Endothelial cell of umbilical vein (primary cell): ENCODE measurements at regions of chr20 and their contacts with region 1.

Region 1: GRCh38 chr20:5529331-5530148 is 212.8 kb upstream of the PROKR2 start:
- DNase-seq: peak; percentile 71
- H3K4me3 ChIP-seq: no peak overlapping the region
- H3K27ac ChIP-seq: no peak overlapping the region
- H3K4me1 ChIP-seq: no peaks in the 10 kb centered on the region
- H3K27me3 ChIP-seq: peaks cover 0 to 5% of the 10 kb centered on the region in 2 experiments
- CTCF ChIP-seq: peak; percentile 91 to 94
- POLR2A ChIP-seq: no peak

Region 2: DNA sequence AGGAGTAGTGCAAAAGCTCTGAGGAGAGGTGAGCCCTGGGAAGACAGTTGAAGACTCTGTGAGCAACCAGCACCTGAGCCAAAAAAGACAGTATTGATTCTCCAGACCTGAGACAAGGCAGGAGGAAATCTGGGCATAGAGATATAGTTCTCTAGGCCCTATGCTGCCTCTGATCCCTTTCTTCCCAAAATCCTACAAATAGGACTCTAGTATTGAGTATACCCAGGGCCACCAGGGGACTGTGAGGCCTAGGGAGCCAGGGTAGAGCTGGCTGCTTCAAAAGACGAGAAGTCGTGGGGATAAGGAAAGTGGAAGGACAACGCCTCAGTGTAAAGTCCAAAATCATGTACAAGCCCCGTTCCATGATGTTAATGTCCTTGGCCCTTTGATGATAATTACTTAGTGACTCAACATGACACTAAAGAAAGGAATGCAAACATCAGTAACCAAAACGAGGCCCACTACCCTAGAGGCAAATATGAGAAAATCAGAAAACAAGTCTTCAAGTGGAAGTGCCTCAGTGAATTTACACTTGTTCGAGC is 15.5 kb before region 1 on chr20:
- CTCF ChIA-PET with region 1: interaction called, 15 read pairs
- POLR2A ChIA-PET with region 1: no interaction called
- dilution Hi-C with region 1: no loop called
- intact Hi-C with region 1: no loop called
- DNase-seq: no peak
- H3K4me3 ChIP-seq: no peak overlapping the region
- H3K27ac ChIP-seq: no peak overlapping the region
- H3K4me1 ChIP-seq: no peaks in the 10 kb centered on the region
- H3K27me3 ChIP-seq: no peaks in the 10 kb centered on the region
- CTCF ChIP-seq: no peak
- POLR2A ChIP-seq: no peak

Region 3: DNA sequence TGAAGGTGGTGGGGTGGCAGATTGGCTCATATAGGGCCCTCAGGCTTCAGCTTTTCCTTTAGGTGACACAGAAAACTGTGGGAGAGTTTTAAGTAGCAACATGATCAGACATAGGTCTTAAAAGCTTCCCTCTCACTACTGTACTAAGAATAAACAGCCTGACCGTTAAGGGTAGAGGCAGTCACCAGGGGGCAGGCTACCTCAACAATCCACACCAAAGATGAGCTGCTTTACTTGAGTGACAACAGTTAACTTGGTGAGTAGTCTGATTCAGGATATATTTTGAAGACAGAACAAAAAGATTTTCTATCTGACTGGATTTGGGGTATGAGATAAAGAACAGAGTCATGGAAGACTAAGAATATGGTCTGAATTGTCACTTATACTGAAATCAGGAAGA is 27.6 kb after region 1 on chr20:
- CTCF ChIA-PET with region 1: interaction called, 28 read pairs
- POLR2A ChIA-PET with region 1: no interaction called
- dilution Hi-C with region 1: no loop called
- intact Hi-C with region 1: loop called (anchors 2 kb)
- DNase-seq: peak; percentile 63
- H3K4me3 ChIP-seq: no peak overlapping the region
- H3K27ac ChIP-seq: no peak overlapping the region
- H3K4me1 ChIP-seq: no peaks in the 10 kb centered on the region
- H3K27me3 ChIP-seq: no peaks in the 10 kb centered on the region
- CTCF ChIP-seq: peak; percentile 53 to 61
- POLR2A ChIP-seq: no peak

Region 4: GRCh38 chr20:5586720-5587119 is 57.2 kb after region 1 on chr20:
- CTCF ChIA-PET with region 1: no interaction called
- POLR2A ChIA-PET with region 1: no interaction called
- dilution Hi-C with region 1: no loop called
- intact Hi-C with region 1: no loop called
- DNase-seq: no peak
- H3K4me3 ChIP-seq: no peak overlapping the region
- H3K27ac ChIP-seq: no peak overlapping the region
- H3K4me1 ChIP-seq: peaks cover 2% of the 10 kb centered on the region
- H3K27me3 ChIP-seq: no peaks in the 10 kb centered on the region
- CTCF ChIP-seq: no peak
- POLR2A ChIP-seq: no peak

Region 5: GRCh38 chr20:5950271-5951031 is 420.9 kb after region 1 on chr20 and contains the starts of genes MCM8 and TRMT6:
- CTCF ChIA-PET with region 1: interaction called, 9 read pairs
- POLR2A ChIA-PET with region 1: no interaction called
- dilution Hi-C with region 1: no loop called
- intact Hi-C with region 1: loop called (anchors 1 kb)
- DNase-seq: peak; percentile 94
- H3K4me3 ChIP-seq: peak within 1 kb of the TSS; percentile 76 to 93 (median 81)
- H3K27ac ChIP-seq: peak within 1 kb of the TSS; percentile 67
- H3K4me1 ChIP-seq: peaks cover 24% of the 10 kb centered on the region
- H3K27me3 ChIP-seq: no peaks in the 10 kb centered on the region
- CTCF ChIP-seq: no peak
- POLR2A ChIP-seq: peak; percentile 60
- total RNA-seq, gene MCM8: 13.4 and 14.4 TPM in 2 replicates
- total RNA-seq, gene TRMT6: 11.0 and 12.0 TPM in 2 replicates

Region 6: DNA sequence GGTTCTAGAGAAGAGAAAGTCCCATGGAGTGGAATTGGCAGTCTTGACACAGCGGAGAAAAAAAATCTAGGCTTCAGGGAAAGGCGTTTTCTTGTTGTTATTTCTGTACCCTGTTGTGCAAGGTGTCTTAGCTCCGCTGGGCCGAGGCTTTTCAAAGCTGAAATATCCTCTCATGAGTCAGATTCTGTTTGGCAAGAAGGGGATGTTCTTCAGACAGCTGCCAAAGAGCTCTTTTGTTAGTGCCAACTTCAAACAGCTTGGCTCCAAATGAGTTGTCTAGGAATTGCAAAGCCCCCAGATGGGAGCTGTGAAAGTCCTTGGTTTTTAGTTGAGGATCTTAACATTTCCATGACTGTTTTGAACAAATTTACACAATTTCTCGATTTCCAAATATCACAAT is 478.7 kb after region 1 on chr20:
- CTCF ChIA-PET with region 1: interaction called, 3 read pairs
- POLR2A ChIA-PET with region 1: no interaction called
- dilution Hi-C with region 1: no loop called
- intact Hi-C with region 1: loop called (anchors 1 kb)
- DNase-seq: peak; percentile 74
- H3K4me3 ChIP-seq: peak overlapping the region in 1 of 3 experiments; percentile 14
- H3K27ac ChIP-seq: no peak overlapping the region
- H3K4me1 ChIP-seq: peaks cover 23% of the 10 kb centered on the region
- H3K27me3 ChIP-seq: no peaks in the 10 kb centered on the region
- CTCF ChIP-seq: no peak
- POLR2A ChIP-seq: no peak

Region 7: DNA sequence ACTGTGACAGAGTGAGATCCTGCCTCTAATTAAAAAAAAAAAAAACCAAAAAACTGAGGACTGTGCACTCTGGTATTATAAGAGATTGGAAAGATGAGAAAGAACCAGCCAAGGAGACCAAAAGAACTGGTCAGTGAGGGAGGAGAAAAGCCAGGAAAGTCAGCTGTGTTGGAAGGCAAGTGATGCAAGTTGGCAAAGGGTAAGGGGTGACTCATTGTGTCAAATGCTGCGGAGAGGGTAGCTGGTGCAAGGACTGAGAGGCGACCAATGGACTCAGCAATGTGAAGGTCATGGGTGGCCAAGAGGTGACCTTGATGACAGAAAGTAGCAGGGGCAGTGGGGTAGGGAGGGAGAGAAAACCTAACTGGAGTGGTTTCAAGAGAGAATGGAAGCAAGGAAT is 551.7 kb after region 1 on chr20:
- CTCF ChIA-PET with region 1: interaction called, 191 read pairs
- POLR2A ChIA-PET with region 1: interaction called, 4 read pairs
- dilution Hi-C with region 1: no loop called
- intact Hi-C with region 1: loop called (anchors 1 kb)
- DNase-seq: no peak
- H3K4me3 ChIP-seq: no peak overlapping the region
- H3K27ac ChIP-seq: no peak overlapping the region
- H3K4me1 ChIP-seq: no peaks in the 10 kb centered on the region
- H3K27me3 ChIP-seq: no peaks in the 10 kb centered on the region
- CTCF ChIP-seq: no peak
- POLR2A ChIP-seq: no peak